CD8-positive, alpha-beta T cell (primary cell): ENCODE measurements at regions of chr11 and their contacts with region 1.

Region 1: GRCh38 chr11:13955971-13956421 is 6.5 kb upstream of the SPON1 start:
- DNase-seq: peak in 8 of 9 experiments; percentile 39 to 86 (median 66)
- ATAC-seq: peak; percentile 92
- H3K4me3 ChIP-seq: no peak overlapping the region
- H3K4me3 Mint-ChIP-seq: no peak overlapping the region
- H3K27ac ChIP-seq: no peak overlapping the region
- H3K27ac Mint-ChIP-seq: no peak overlapping the region
- H3K4me1 ChIP-seq: peaks cover 6% of the 10 kb centered on the region
- H3K4me1 Mint-ChIP-seq: no peaks in the 10 kb centered on the region
- H3K27me3 ChIP-seq: peaks cover 0 to 3% of the 10 kb centered on the region in 2 experiments
- H3K27me3 Mint-ChIP-seq: peaks cover 9% of the 10 kb centered on the region
- CTCF ChIP-seq: peak; percentile 97

Region 2: DNA sequence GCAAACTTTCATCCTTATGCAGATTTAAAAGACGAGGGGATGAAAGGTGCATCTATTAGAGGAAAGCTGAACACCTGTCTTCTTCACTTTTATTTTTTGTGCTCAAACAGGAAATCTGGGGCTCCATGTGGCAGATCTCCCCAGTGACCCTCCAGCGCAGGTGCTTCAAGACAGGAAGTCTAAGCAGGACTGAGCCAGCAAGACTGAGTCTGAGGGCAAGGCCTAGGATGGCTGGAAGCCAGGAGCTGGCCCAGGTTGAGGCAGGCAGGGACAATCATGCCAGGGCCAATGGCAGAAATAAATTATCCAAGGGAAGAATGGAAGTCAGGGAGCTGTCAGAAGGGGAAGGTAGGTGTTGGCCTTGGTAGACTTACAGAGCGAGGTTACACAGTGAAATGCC is 94.6 kb before region 1 on chr11:
- CTCF ChIA-PET with region 1: interaction called, 15 read pairs
- POLR2A ChIA-PET with region 1: interaction called, 3 read pairs
- intact Hi-C with region 1: loop called (anchors 1 to 5 kb)
- DNase-seq: peak in 1 of 9 experiments; percentile 32
- ATAC-seq: peak; percentile 34
- H3K4me3 ChIP-seq: no peak overlapping the region
- H3K4me3 Mint-ChIP-seq: peak overlapping the region; percentile 16
- H3K27ac ChIP-seq: no peak overlapping the region
- H3K27ac Mint-ChIP-seq: peak overlapping the region; percentile 87
- H3K4me1 ChIP-seq: peaks cover 23% of the 10 kb centered on the region
- H3K4me1 Mint-ChIP-seq: peaks cover 26% of the 10 kb centered on the region
- H3K27me3 ChIP-seq: no peaks in the 10 kb centered on the region
- H3K27me3 Mint-ChIP-seq: no peaks in the 10 kb centered on the region
- CTCF ChIP-seq: no peak

Region 3: DNA sequence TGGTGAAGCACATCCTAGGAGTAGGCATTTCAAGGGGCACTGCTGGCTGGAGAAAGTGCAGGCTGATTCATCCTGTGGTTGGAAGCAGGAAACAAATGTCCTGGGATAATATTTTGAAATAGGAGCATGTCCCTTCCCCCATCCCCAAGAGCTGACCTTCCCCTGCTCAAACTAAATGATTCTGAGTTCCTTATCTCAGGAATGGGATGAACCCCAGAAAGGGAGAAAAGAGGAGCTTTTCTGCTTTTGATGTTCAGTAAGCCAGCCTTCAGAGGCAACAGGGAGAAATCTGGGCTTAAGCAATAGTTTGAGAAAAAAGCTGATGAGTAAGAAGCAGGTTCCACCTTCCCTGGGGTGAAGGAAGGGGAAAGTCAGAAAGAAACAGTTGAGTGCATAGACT is 13.0 kb before region 1 on chr11:
- CTCF ChIA-PET with region 1: interaction called, 16 read pairs
- POLR2A ChIA-PET with region 1: interaction called, 10 read pairs
- intact Hi-C with region 1: no loop called
- DNase-seq: no peak
- ATAC-seq: no peak
- H3K4me3 ChIP-seq: no peak overlapping the region
- H3K4me3 Mint-ChIP-seq: no peak overlapping the region
- H3K27ac ChIP-seq: no peak overlapping the region
- H3K27ac Mint-ChIP-seq: no peak overlapping the region
- H3K4me1 ChIP-seq: peaks cover 44% of the 10 kb centered on the region
- H3K4me1 Mint-ChIP-seq: peaks cover 57% of the 10 kb centered on the region
- H3K27me3 ChIP-seq: no peaks in the 10 kb centered on the region
- H3K27me3 Mint-ChIP-seq: no peaks in the 10 kb centered on the region
- CTCF ChIP-seq: no peak

Region 4: GRCh38 chr11:13993096-13993765 is 37.2 kb after region 1 on chr11:
- CTCF ChIA-PET with region 1: no interaction called
- POLR2A ChIA-PET with region 1: no interaction called
- intact Hi-C with region 1: no loop called
- DNase-seq: no peak
- ATAC-seq: no peak
- H3K4me3 ChIP-seq: no peak overlapping the region
- H3K4me3 Mint-ChIP-seq: no peak overlapping the region
- H3K27ac ChIP-seq: no peak overlapping the region
- H3K27ac Mint-ChIP-seq: no peak overlapping the region
- H3K4me1 ChIP-seq: no peaks in the 10 kb centered on the region
- H3K4me1 Mint-ChIP-seq: no peaks in the 10 kb centered on the region
- H3K27me3 ChIP-seq: no peaks in the 10 kb centered on the region
- H3K27me3 Mint-ChIP-seq: peaks cover 3% of the 10 kb centered on the region
- CTCF ChIP-seq: no peak

Region 5: GRCh38 chr11:14148653-14149273 is 192.8 kb after region 1 on chr11:
- CTCF ChIA-PET with region 1: interaction called, 144 read pairs
- POLR2A ChIA-PET with region 1: interaction called, 4 read pairs
- intact Hi-C with region 1: loop called (anchors 1 kb)
- DNase-seq: peak in 2 of 9 experiments; percentile 44 to 65
- ATAC-seq: peak; percentile 94
- H3K4me3 ChIP-seq: no peak overlapping the region
- H3K4me3 Mint-ChIP-seq: no peak overlapping the region
- H3K27ac ChIP-seq: no peak overlapping the region
- H3K27ac Mint-ChIP-seq: no peak overlapping the region
- H3K4me1 ChIP-seq: no peaks in the 10 kb centered on the region
- H3K4me1 Mint-ChIP-seq: peaks cover 3% of the 10 kb centered on the region
- H3K27me3 ChIP-seq: no peaks in the 10 kb centered on the region
- H3K27me3 Mint-ChIP-seq: no peaks in the 10 kb centered on the region
- CTCF ChIP-seq: peak; percentile 75

Region 6: GRCh38 chr11:14454861-14455632 is 499.1 kb after region 1 on chr11:
- CTCF ChIA-PET with region 1: interaction called, 3 read pairs
- POLR2A ChIA-PET with region 1: no interaction called
- intact Hi-C with region 1: loop called (anchors 5 to 10 kb)
- DNase-seq: peak in 2 of 9 experiments; percentile 50 to 61
- ATAC-seq: peak; percentile 52
- H3K4me3 ChIP-seq: no peak overlapping the region
- H3K4me3 Mint-ChIP-seq: no peak overlapping the region
- H3K27ac ChIP-seq: no peak overlapping the region
- H3K27ac Mint-ChIP-seq: no peak overlapping the region
- H3K4me1 ChIP-seq: no peaks in the 10 kb centered on the region
- H3K4me1 Mint-ChIP-seq: no peaks in the 10 kb centered on the region
- H3K27me3 ChIP-seq: no peaks in the 10 kb centered on the region
- H3K27me3 Mint-ChIP-seq: no peaks in the 10 kb centered on the region
- CTCF ChIP-seq: peak; percentile 75